ENCODE measurements at regions of chr11 and their contacts with region 1.

Region 1: DNA sequence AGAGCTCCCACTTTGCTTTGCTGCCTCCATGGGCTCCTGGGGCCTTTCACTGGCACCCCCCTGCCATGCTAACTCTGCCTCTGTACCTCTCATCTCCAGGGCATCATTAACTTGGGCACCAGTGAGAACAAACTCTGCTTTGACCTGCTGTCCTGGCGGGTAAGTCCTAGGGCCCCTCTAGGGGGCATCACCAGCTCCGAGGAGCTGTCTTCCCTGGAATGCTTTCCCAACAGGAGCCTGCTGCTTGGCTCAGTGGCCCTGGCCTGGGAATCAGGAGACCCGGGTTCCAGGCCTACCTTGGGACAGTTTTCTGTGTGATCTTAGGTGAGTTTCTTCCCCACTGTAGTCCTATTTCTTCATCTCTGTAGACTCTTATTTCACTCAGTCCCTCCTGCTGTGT is 5.1 kb downstream of the ACCS start:
- DNase-seq: peak; percentile 36
- ATAC-seq: peak; percentile 64
- H3K4me3 Mint-ChIP-seq: no peak overlapping the region
- H3K27ac Mint-ChIP-seq: no peak overlapping the region
- H3K4me1 Mint-ChIP-seq: peaks cover 14% of the 10 kb centered on the region
- H3K27me3 Mint-ChIP-seq: peaks cover 10% of the 10 kb centered on the region
- CTCF ChIP-seq: 0 out of 2 replicates have a peak, but pooled peaks have one; percentile 12

Region 2: DNA sequence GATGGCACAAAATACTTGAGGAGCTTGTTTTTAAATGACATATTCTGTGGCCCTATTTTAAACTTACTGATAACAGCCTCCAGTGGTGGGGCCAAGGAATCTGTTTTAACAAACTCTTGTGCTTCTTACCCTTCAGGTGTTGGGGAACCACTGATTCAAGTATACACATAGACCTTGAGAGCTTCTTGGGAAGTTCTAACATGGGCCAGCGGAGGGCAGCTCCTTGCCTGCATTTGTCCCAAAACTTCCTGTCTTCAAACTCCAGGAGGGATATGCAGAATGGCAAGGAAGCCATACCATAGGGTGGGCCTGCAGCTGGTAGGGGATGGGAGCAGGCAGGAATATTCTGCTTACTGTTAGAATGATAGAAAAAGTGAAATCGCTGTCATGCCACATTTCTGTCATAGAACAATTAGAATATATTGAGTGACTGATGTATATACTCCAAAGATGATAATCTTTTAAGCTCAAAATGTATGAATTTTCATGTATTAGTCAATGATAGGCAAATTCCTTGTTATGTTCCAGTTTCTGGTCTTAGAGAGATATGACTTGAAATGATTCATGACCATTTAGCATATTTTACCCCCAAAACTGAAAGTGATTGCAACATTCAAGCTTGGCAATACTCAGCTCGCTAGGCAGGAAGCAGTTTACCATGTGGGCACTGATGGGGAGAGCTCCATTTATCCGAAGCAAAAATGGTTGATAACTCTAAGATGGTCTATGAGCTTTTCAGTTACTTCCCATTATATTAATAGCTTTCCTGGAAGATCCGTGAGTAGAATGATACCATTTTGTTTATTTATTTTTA is 33.5 kb after region 1 on chr11:
- CTCF ChIA-PET with region 1: interaction called, 10 read pairs
- POLR2A ChIA-PET with region 1: no interaction called
- DNase-seq: peak; percentile 28
- ATAC-seq: peak; percentile 88
- H3K4me3 Mint-ChIP-seq: no peak overlapping the region
- H3K27ac Mint-ChIP-seq: no peak overlapping the region
- H3K4me1 Mint-ChIP-seq: peaks cover 10% of the 10 kb centered on the region; the same call in 1 of the 2 replicates
- H3K27me3 Mint-ChIP-seq: no peaks in the 10 kb centered on the region
- CTCF ChIP-seq: no peak

Measured in WTC11 (cell line).